Breast epithelium (tissue), 4 donors: ENCODE measurements at regions of chr7 and their contacts with region 1.

Region 1: DNA sequence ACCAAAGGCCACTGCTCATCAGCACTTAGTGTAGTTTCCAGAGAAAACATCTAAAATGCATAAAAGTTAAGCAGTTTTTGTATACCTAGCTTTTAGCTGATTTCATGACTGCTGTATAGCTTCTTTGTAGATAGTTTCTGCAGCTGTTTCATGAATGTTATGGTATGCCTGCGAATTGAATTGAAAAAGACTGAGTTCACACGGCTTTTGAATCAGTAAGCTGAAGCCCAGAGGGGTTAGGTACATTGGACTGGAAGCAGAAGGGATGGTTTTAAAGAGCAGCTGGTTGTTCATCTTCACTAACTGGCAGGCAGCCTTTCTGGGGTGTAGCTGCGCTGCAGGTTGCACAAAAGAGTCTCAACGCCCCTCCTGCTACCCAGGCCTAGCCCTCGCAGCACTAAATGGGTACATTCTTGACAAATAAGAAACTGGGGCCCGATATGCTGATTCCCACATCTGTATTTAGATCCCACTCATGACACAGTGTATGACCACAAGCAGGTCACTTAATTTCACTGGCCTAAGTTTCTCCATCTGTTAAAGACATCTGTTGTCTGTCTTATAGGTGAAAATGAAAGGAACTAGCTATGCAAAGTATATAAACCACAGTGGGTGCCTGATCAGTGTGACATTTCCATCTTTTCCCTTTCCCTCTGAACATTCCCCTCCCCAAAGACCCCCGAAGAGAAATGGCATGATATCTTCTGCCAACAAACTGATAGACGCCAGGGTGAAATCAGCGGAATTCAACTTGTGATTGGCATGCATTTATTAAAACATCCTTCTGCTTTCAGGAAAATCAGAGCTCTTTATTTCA is 85.9 kb upstream of the AGBL3 start:
- DNase-seq: no peak
- H3K4me3 ChIP-seq: no peak overlapping the region
- H3K27ac ChIP-seq: peak overlapping the region; percentile 23 to 57
- H3K4me1 ChIP-seq: peaks cover 0 to 7% of the 10 kb centered on the region in 2 donors
- H3K27me3 ChIP-seq: no peaks in the 10 kb centered on the region
- CTCF ChIP-seq: no peak
- POLR2A ChIP-seq: no peak

Region 2: DNA sequence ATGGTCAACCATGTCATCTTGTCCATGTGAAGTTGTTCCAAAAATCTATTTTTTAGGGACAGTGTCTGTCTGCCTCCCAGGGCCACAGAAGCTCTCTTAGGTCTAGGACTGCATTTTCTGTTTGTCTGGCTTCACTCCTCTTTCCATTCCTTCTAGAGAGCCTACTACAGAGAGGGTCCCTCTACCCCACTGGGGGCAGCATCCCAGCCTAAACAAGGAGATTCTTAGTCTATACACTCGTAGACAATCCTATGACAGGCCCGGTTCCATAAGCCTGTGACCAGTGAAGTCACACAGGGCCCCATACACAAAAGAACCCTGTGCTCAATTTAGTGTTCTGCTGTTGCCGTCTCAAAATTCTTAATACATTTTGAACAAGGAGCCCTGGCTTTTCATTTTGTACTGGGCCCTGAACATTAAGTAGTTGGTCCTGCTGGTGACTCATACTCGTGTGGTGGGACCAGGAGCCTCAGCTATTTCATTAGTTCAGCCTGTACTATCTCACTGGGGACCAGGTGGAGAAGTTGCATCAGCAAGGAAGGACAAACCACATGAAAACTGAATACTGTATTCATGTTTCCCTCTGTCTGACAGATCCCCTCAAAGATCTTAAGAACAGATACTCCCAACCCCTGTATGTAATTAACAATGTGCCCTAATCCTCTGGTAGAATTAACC is 871.7 kb after region 1 on chr7:
- intact Hi-C with region 1: loop called (anchors 5 kb)
- DNase-seq: no peak
- H3K4me3 ChIP-seq: no peak overlapping the region
- H3K27ac ChIP-seq: no peak overlapping the region
- H3K4me1 ChIP-seq: no peaks in the 10 kb centered on the region
- H3K27me3 ChIP-seq: no peaks in the 10 kb centered on the region
- CTCF ChIP-seq: no peak
- POLR2A ChIP-seq: no peak